ENCODE measurements at regions of chr3 and their contacts with region 1.

Region 1: DNA sequence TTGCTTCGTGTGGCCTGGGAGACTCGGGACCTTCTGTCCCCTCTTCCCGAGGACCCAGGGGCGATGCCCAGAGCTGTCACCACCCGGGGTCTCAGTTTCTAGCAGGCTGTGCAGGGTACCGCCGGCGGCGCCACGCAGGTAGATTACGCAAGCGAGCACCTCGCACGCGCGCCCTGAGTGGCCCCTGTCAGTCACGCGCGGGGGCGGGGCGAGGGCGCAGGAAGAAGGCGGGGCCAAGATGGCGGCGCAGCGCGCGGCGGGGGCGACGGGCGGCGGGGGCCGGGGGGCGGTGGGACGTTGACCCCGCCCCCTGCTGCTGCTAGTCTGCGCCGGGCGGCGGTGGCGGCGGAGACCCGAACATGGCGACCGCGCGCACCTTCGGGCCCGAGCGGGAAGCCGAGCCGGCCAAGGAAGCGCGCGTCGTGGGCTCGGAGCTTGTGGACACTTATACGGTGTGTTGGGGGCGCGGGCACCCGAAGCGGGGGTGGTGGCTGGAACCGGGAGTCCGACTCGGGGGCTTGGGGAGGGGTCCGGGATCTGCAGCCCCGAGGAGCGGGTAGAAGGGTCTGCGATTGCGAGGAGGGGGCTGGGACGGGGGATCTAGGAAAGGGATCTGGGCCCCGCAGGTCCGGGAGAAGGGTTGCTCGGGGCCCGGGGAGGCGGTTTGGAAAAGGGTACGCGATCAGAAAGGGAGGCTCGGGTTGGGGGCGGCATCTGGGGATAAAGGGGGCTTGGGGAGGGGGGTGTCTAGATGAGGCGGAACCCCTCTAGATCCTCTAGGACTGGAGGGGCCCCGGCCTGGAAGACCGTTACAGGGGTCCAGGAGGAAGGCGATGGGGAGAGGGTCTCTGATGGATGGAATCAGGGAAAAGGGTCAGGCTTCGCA is at the start of gene NISCH:
- DNase-seq: peak; percentile 91 to 94 (median 92)
- ATAC-seq: peak; percentile 90
- H3K4me3 ChIP-seq: peak within 1 kb of the TSS; percentile 69 to 88
- H3K27ac ChIP-seq: peak within 1 kb of the TSS; percentile 81 to 93 (median 92)
- H3K4me1 ChIP-seq: peaks cover 39% of the 10 kb centered on the region
- H3K27me3 ChIP-seq: no peaks in the 10 kb centered on the region
- CTCF ChIP-seq: no peak
- POLR2A ChIP-seq: peak; percentile 35 to 81 (median 77)
- total RNA-seq, gene NISCH: 58.9 to 115 TPM

Region 2: GRCh38 chr3:52313774-52314188 is 141.7 kb before region 1 on chr3:
- intact Hi-C with region 1: no loop called
- DNase-seq: peak in 1 of 4 donors; percentile 54
- ATAC-seq: peak; percentile 45
- H3K4me3 ChIP-seq: no peak overlapping the region
- H3K27ac ChIP-seq: peak overlapping the region in 2 of 4 donors; percentile 13 to 15
- H3K4me1 ChIP-seq: peaks cover 5% of the 10 kb centered on the region
- H3K27me3 ChIP-seq: no peaks in the 10 kb centered on the region
- CTCF ChIP-seq: no peak
- POLR2A ChIP-seq: no peak

Region 3: DNA sequence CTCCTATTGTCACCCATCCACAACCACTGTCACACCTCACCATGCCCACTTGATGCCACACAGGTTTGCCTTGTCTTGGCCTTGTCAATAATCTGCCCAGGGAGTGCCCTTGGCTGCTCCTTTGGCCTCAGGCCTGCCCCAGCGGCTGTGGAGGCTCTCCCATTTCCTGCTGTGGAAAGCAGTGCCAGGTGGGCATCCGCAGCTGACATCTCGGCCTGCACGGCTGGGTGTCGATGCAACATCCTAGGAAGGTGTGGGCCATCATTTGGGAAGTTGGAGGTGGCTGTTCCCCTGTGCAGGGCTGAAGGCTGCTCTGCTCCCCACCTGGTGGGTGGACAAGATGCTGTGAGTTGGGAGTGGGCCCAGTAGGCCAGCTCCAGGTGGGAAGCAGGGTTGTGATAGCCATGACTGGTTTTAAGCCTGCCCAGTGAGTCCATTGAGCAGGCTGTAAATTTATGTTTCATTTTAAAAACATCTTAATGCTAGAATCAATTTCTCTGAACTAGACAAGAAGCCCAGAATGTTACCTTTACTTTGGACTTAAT is 126.9 kb before region 1 on chr3:
- intact Hi-C with region 1: no loop called
- DNase-seq: no peak
- ATAC-seq: no peak
- H3K4me3 ChIP-seq: no peak overlapping the region
- H3K27ac ChIP-seq: no peak overlapping the region
- H3K4me1 ChIP-seq: no peaks in the 10 kb centered on the region
- H3K27me3 ChIP-seq: no peaks in the 10 kb centered on the region
- CTCF ChIP-seq: no peak
- POLR2A ChIP-seq: no peak

Region 4: GRCh38 chr3:52536369-52537164 is 81.0 kb after region 1 on chr3 and contains the start of gene UQCC5:
- intact Hi-C with region 1: loop called (anchors 10 kb)
- DNase-seq: peak; percentile 98 to 99 (median 98)
- ATAC-seq: peak; percentile 93
- H3K4me3 ChIP-seq: peak within 1 kb of the TSS; percentile 28 to 61
- H3K27ac ChIP-seq: peak within 1 kb of the TSS; percentile 84 to 96 (median 92)
- H3K4me1 ChIP-seq: peaks cover 55% of the 10 kb centered on the region
- H3K27me3 ChIP-seq: no peaks in the 10 kb centered on the region
- CTCF ChIP-seq: peak in 2 of 7 experiments; percentile 5 to 17
- POLR2A ChIP-seq: peak; percentile 95 to 98 (median 98)
- total RNA-seq, gene UQCC5: 0.78 to 7.3 TPM